Psoas muscle (tissue), 8 donors: ENCODE measurements at regions of chr5 and their contacts with region 1.

Region 1: DNA sequence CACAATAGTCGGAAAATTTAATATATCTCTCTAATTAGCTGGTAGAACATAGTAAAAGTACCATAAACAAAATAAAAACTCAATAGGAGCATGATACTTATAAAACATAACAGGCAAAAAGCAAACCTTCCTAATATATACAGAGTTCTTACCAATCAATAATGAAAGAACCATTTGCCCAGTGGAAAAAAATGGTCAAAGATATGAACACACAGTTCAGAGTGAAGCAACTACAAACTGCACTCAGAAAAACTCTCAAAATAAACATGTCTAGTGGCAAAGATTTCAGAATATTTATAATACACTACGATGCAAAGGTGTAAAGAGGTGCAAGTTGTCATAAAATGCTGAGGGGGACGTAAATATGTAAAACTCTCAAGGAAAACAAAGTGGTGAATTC is 576.2 kb upstream of the CTNND2 start:
- DNase-seq: no peak
- ATAC-seq: no peak
- H3K4me3 ChIP-seq: no peak overlapping the region
- H3K27ac ChIP-seq: no peak overlapping the region
- H3K4me1 ChIP-seq: no peaks in the 10 kb centered on the region
- H3K27me3 ChIP-seq: no peaks in the 10 kb centered on the region
- CTCF ChIP-seq: no peak

Region 2: DNA sequence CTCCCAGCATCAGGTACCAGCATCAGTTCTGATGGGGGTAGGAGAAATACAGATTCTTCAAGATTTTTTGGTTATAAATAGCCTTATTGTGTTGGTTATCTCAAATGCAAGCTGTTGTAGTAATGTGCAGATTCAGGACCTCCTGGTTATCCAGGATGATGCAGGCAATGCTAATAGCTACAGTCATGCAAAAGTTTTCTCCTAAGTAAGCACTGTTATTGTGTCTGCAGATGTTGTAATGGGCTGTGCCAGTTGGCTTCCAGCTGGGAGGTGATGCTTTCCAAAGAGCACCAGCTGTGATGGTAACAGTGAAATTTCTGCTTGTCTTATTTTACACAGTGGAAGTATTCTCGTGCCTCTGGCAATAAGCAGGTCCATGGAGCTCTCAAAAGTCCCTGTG is 142.9 kb after region 1 on chr5:
- intact Hi-C with region 1: loop called in 1 of 2 experiments (anchors 5 kb)
- DNase-seq: no peak
- ATAC-seq: no peak
- H3K4me3 ChIP-seq: no peak overlapping the region
- H3K27ac ChIP-seq: no peak overlapping the region
- H3K4me1 ChIP-seq: no peaks in the 10 kb centered on the region
- H3K27me3 ChIP-seq: no peaks in the 10 kb centered on the region
- CTCF ChIP-seq: no peak